ENCODE measurements at regions of chr14 and their contacts with region 1.

Region 1: DNA sequence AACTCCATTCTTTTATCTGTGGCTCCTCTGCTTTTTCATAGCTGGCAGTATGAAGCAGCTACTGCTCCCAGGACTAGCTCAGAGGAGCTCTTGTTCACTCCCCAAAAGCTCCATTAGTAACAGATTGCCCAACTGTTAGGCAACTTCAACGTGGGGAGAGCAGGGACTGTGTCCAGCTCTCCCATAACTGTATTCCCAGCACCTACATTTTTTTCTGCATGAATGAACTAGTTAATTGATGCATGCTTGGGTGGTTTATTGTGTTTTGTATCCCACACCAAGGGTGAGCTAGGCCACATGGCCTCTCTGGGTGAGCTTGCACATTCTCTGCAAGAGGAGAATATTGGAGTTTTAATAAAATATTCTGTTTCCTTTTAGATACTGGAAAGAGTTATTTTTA is 15.2 kb downstream of the STON2 start:
- DNase-seq: peak; percentile 66
- H3K4me3 Mint-ChIP-seq: no peak overlapping the region
- H3K27ac Mint-ChIP-seq: no peak overlapping the region
- H3K4me1 Mint-ChIP-seq: peaks cover 13% of the 10 kb centered on the region
- H3K27me3 Mint-ChIP-seq: no peaks in the 10 kb centered on the region
- CTCF ChIP-seq: no peak

Region 2: GRCh38 chr14:80692903-80693302 is 692.0 kb before region 1 on chr14:
- CTCF ChIA-PET with region 1: no interaction called
- POLR2A ChIA-PET with region 1: no interaction called
- intact Hi-C with region 1: no loop called
- DNase-seq: no peak
- H3K4me3 Mint-ChIP-seq: no peak overlapping the region
- H3K27ac Mint-ChIP-seq: no peak overlapping the region
- H3K4me1 Mint-ChIP-seq: no peaks in the 10 kb centered on the region
- H3K27me3 Mint-ChIP-seq: no peaks in the 10 kb centered on the region
- CTCF ChIP-seq: no peak

Region 3: DNA sequence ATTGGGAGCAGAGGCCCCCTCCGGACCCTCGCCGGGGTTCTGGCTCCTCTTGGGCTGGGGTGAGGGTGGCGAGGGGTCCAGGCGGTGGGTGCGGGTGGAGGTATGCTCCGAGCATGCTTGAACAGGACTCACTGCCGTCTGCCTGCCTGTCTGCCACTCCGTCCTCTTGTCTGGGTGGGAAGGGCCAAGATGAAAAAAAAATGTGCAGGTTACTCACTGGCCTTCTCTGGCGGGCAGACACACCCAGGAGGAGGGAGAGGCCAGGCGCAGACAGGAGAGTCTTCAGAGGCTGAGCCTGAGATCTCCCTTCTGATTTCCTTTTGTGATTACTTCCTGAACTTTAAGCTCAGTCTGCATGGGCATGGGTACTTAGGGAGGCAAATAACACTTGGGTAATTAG is 60.9 kb before region 1 on chr14:
- CTCF ChIA-PET with region 1: no interaction called
- POLR2A ChIA-PET with region 1: interaction called, 10 read pairs
- intact Hi-C with region 1: no loop called
- DNase-seq: peak; percentile 89
- H3K4me3 Mint-ChIP-seq: peak overlapping the region; percentile 70
- H3K27ac Mint-ChIP-seq: peak overlapping the region; percentile 14
- H3K4me1 Mint-ChIP-seq: peaks cover 28% of the 10 kb centered on the region
- H3K27me3 Mint-ChIP-seq: no peaks in the 10 kb centered on the region
- CTCF ChIP-seq: no peak

Measured in MCF 10A (cell line).